ENCODE measurements at regions of chr16 and their contacts with region 1.

Region 1: DNA sequence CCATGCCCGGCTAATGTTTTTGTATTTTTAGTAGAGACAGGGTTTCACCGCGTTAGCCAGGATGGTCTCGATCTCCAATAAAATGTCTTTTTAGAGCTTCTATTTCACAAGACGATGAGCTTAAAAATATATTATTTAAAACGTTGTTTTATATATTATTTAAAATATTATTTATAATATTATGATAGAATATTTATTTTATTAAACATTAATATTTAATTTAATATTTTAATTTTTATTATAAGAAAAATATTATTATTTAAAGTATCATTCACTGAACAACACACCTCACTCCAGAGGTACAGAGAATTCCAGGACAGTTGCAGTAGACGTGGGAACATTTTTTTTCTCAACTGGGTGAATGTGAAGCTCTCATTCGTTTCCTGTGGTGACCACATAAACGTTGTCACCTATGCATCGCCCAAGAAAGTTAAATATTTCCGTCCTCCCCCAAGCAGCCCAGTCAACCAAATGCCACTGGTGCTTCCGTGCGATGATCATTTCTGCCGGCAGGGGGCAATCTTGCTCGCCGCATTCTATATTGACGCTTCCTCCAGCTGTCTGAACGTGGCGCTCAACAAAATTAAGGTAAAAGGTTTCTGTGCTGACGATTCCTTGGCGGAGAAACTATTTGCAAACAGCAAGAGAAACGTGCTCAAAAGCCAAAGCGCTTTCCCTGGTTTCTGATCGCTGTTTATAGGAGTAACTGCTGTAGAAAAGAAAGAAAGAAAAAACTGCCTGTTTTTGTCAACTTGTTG is 41.7 kb upstream of the PRSS54 start:
- DNase-seq: peak; percentile 94
- H3K4me3 Mint-ChIP-seq: no peak overlapping the region
- H3K27ac Mint-ChIP-seq: no peak overlapping the region
- H3K4me1 Mint-ChIP-seq: peaks cover 6% of the 10 kb centered on the region
- H3K27me3 Mint-ChIP-seq: peaks cover 2% of the 10 kb centered on the region

Region 2: DNA sequence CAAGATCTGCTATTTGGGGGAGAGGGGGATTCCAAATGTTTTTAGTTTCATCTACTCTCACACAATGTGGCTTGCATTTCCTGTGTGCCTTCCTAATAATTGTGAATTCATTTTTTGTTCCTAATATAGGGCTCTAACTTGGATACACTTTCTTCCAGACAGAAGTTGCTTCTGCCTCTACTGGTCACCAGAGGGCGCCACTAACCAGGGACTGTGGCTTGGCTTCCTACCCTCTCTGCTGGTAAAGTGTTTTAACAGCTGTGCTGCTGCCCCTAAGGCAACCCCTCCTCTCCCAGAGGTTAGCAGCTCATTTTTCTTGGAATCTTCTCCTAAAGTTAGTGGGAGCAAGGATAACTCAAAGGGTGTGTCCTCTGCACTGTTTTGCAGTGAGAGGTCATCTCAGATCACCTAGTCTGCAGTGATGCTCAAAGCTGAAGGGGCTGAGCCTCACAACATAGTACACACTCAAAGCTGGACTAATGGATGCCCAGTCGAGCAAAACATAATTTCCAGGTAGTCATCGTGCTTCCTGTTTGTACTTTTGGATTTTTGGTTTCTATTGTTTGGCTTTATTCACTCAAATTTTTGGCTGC is 36.7 kb before region 1 on chr16:
- CTCF ChIA-PET with region 1: interaction called, 10 read pairs
- intact Hi-C with region 1: no loop called
- DNase-seq: peak; percentile 45
- H3K4me3 Mint-ChIP-seq: no peak overlapping the region
- H3K27ac Mint-ChIP-seq: no peak overlapping the region
- H3K4me1 Mint-ChIP-seq: no peaks in the 10 kb centered on the region
- H3K27me3 Mint-ChIP-seq: peaks cover 3% of the 10 kb centered on the region

Region 3: GRCh38 chr16:58324792-58325191 is 11.7 kb before region 1 on chr16:
- CTCF ChIA-PET with region 1: interaction called, 17 read pairs
- intact Hi-C with region 1: no loop called
- DNase-seq: no peak
- H3K4me3 Mint-ChIP-seq: no peak overlapping the region
- H3K27ac Mint-ChIP-seq: no peak overlapping the region
- H3K4me1 Mint-ChIP-seq: no peaks in the 10 kb centered on the region
- H3K27me3 Mint-ChIP-seq: peaks cover 7% of the 10 kb centered on the region

Region 4: DNA sequence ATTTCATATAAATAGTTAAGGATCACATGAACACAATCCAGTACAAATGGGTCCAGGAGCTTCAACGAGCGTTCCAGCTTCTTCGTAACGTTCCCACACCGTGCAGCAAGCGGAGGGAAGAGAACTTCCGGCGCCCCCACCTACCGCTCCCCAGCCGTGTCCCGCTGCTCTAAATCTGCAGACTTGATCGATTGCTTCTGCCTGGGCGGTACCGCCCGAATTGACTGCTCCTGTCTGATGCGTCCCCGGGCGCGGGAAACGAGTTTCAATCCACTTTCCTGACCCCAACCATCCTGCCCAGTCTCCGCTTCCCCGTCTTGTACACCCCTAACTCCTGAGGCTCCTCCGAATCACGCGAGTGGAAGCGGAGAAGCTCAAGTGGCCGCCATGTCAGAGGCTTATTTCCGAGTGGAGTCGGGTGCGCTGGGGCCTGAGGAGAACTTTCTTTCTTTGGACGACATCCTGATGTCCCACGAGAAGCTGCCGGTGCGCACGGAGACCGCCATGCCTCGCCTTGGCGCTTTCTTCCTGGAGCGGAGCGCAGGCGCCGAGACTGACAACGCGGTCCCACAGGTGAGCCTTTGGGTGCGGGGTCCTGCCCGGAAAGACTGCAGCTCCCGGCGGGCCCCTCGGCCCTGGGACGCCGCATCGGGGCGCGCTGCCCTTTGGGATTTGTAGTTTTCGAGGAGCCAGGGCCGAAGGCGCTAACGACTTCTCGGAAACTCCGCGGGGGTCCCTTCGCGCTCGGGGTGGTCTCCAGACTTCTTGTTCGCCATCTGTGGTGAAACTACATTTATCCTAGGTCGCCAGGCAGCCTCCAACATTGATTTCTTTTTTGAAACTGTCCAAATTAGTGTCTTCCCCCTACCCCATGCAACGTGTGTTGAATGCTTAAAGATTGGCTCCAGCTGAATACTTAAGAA is 56.0 kb after region 1 on chr16 and contains the start of gene GINS3:
- CTCF ChIA-PET with region 1: interaction called, 23 read pairs
- intact Hi-C with region 1: loop called (anchors 2 kb)
- DNase-seq: peak; percentile 94
- H3K4me3 Mint-ChIP-seq: peak within 1 kb of the TSS; percentile 98
- H3K27ac Mint-ChIP-seq: peak within 1 kb of the TSS; percentile 99
- H3K4me1 Mint-ChIP-seq: peaks cover 16% of the 10 kb centered on the region
- H3K27me3 Mint-ChIP-seq: no peaks in the 10 kb centered on the region
- total RNA-seq, gene GINS3: 19.2 to 20.3 TPM

Region 5: GRCh38 chr16:58487566-58488351 is 151.2 kb after region 1 on chr16:
- CTCF ChIA-PET with region 1: interaction called, 130 read pairs
- intact Hi-C with region 1: loop called (anchors 1 kb)
- DNase-seq: peak; percentile 82
- H3K4me3 Mint-ChIP-seq: no peak overlapping the region
- H3K27ac Mint-ChIP-seq: no peak overlapping the region
- H3K4me1 Mint-ChIP-seq: no peaks in the 10 kb centered on the region
- H3K27me3 Mint-ChIP-seq: peaks cover 5% of the 10 kb centered on the region

Region 6: DNA sequence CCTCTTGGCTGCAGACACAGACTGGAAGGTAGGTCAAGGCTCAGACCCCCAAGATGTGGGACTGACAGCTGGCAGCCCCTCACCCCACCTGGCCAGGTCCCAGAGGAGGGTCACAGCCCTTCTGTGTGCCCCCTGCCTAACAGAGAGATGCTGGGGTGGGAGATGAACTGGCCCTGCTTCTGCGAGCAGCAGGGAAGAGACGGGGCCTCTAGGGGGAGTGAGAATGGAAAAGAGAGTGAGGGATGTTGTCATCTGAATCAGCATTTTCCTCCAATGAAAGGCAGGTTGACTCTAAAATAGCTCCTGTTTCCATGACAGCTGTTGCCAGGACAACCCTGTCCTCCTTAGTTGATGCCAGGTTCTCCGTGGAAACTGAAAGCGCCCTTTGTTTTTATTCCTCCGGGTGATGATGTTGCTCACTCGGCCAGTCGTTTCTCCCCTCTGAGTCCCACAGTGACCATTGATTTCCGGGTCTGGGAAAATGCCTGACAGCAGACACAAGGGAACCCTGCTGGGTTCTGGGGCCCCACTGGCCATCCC is 158.5 kb after region 1 on chr16:
- CTCF ChIA-PET with region 1: interaction called, 14 read pairs
- intact Hi-C with region 1: no loop called
- DNase-seq: peak; percentile 94
- H3K4me3 Mint-ChIP-seq: no peak overlapping the region
- H3K27ac Mint-ChIP-seq: no peak overlapping the region
- H3K4me1 Mint-ChIP-seq: peaks cover 9% of the 10 kb centered on the region
- H3K27me3 Mint-ChIP-seq: no peaks in the 10 kb centered on the region

Region 7: DNA sequence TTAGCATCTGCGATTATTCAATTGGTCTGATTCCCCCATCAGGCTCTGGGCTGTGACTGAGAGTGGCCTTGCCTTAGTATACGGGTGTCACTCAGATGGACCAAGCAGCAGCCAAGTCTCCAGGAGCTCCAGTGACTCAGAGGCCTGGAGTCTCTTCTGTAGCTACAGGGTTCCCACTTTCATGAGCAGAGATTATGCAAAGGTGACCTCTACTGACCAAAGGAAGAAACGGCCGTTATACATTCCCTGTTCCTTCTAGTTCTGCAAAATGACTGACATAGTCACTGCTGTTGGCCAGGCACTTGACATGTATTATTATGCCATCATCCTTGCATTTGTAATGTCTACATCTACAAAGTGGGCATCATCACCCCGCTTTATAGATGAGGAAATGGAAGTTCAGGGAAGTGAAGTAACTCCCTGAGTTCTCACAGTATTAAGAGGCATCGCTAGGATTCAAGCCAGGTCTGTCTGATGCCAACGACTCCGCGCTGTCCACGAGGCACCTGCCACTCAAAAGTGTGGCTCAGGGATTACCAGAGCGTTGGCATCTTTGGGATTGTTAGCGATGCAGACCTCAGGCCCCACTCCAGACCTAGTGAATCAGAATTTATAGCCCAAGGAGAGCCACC is 324.8 kb after region 1 on chr16:
- CTCF ChIA-PET with region 1: interaction called, 14 read pairs
- intact Hi-C with region 1: loop called (anchors 1 kb)
- DNase-seq: peak; percentile 28
- H3K4me3 Mint-ChIP-seq: no peak overlapping the region
- H3K27ac Mint-ChIP-seq: no peak overlapping the region
- H3K4me1 Mint-ChIP-seq: no peaks in the 10 kb centered on the region
- H3K27me3 Mint-ChIP-seq: peaks cover 5% of the 10 kb centered on the region

Measured in activated naive CD4-positive, alpha-beta T cell treated with anti-CD3 and anti-CD28 coated beads for 36 hours (primary cell).